ENCODE measurements at regions of chr1 and their contacts with region 1.

Region 1: GRCh38 chr1:235971571-235972310 is 93.1 kb downstream of the NID1 start:
- DNase-seq: peak; percentile 79 to 94
- H3K4me3 ChIP-seq: peak overlapping the region; percentile 32 to 60 (median 46); a peak in 6 of 8 replicates
- H3K27ac ChIP-seq: peak overlapping the region; percentile 73; the same call in 1 of the 2 replicates
- H3K4me1 ChIP-seq: 0 out of 7 replicates have a peak, but pooled peaks cover 0 to 3% (median 0%) of the 10 kb centered on the region in 4 experiments
- H3K27me3 ChIP-seq: no peaks in the 10 kb centered on the region
- CTCF ChIP-seq: peak; percentile 70 to 88 (median 82)
- EP300 ChIP-seq: 0 out of 3 replicates have a peak, but pooled peaks of 1 of the 2 experiments have one; percentile 8
- POLR2A ChIP-seq: peak; percentile 60 to 78
- RAD21 ChIP-seq: peak; percentile 90 to 93

Region 2: DNA sequence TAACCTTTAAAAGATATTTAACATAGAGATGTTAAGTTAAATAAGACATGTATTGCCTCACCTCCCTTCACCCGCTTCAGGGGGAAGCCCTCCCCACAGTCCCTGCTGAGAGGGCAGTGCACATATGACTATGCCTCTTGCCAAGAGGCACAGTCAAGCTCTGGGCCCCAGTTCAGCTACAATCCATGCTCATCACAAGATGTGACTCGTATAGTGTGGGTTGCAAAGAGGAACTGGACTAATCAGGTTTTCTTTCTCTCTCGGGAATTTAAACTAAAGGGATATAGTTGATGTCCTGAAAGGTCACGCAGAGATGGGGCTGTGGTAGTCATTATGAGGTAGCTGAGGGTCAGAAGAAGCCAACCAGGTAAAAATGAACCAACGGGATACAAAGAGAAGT is 140.6 kb before region 1 on chr1:
- CTCF ChIA-PET with region 1: interaction called, 12 read pairs
- POLR2A ChIA-PET with region 1: no interaction called
- DNase-seq: no peak
- H3K4me3 ChIP-seq: no peak overlapping the region
- H3K27ac ChIP-seq: no peak overlapping the region
- H3K4me1 ChIP-seq: no peaks in the 10 kb centered on the region
- H3K27me3 ChIP-seq: no peaks in the 10 kb centered on the region
- CTCF ChIP-seq: no peak
- EP300 ChIP-seq: no peak
- POLR2A ChIP-seq: no peak
- RAD21 ChIP-seq: no peak

Region 3: DNA sequence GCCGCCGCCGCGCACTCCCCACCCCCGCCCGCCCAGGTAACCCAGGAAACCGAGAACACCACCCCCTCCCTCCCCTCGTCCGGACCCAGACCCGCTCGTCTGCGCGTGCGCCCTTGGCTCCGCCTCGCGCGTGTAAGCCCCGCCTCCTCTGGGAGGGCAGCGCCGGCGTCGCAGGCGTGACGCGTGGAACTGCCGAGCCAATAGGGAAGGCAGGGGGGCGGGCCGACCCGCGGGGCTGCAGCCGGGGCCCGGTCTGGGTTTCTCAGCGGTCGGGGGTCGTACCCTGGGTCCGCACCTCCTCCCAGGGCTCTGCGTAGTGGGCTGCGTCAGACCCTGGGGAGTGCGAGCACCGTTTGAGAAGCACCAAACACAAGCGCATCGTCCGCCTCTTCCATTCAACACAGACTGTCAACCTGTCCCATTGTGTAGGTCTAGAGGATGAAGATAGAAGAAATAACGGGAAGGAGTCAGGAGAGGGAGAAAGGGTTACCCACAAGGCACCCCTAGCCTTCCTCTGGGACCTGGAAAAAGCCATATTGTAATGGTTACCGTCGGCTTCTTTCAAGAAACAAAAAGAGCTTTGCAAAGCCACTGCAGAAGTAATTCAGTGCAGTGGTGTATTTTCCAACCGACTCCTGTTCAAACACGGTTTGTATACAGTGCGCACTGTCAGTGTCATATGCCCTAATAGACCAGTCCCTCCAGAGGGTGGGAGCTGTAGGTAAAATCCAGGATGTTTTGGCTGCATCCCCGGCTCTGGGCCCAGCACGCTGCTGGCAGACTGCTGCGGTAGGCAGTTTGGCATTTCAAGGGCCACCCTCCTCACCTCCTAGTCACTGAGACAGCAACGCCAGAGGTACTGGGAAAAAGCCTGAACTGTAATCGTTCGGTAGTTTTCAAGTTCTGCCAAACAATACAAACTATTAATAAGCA is 104.6 kb before region 1 on chr1:
- CTCF ChIA-PET with region 1: interaction called, 53 read pairs
- POLR2A ChIA-PET with region 1: interaction called, 3 read pairs
- DNase-seq: peak; percentile 88 to 99
- H3K4me3 ChIP-seq: peak overlapping the region; percentile 72 to 96 (median 80)
- H3K27ac ChIP-seq: peak overlapping the region; percentile 11
- H3K4me1 ChIP-seq: no peaks in the 10 kb centered on the region; a peak in 1 of 7 replicates
- H3K27me3 ChIP-seq: peaks cover 2 to 17% (median 11%) of the 10 kb centered on the region in 4 experiments
- CTCF ChIP-seq: no peak
- EP300 ChIP-seq: no peak; a peak in 1 of 3 replicates
- POLR2A ChIP-seq: peak in 1 of 2 experiments; percentile 71; a peak in 2 of 3 replicates
- RAD21 ChIP-seq: no peak

Region 4: DNA sequence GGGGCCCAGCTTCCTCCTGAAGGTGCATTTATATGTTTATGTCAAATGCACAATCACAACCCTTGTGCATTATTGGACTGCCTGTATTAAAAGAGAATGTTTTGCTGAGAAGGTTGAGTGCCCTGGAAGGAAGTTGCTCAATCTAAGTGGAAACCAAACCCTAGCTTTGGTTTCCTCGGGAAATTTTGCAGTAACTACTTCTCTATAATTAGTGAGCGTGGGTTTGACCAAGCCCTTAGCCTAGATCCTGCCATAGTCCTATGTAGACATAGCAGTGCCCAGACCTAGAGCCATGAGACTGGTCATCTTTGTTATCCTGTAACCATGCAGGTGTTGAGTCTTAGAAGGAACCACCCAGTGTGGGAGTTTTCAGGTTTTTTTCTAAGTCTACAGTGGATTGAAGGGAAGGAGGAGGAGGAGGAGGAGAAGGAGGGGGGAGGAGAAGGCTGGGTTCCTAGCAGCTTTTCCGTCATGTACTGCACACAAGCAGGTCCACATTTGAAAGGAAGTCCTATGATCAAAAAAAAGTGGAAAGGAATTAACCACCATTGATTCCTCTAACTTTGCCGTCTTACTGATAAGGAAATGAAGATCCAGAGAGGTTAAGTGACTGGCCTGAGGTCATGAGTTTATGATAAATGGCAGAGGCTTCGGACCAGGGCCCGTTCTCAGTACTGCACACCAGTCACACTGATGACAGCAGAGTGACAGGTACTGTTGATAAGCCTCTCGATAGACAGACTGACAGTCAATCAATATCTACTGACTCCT is 32.8 kb before region 1 on chr1:
- CTCF ChIA-PET with region 1: interaction called, 35 read pairs
- POLR2A ChIA-PET with region 1: no interaction called
- DNase-seq: no peak
- H3K4me3 ChIP-seq: no peak overlapping the region
- H3K27ac ChIP-seq: no peak overlapping the region
- H3K4me1 ChIP-seq: no peaks in the 10 kb centered on the region
- H3K27me3 ChIP-seq: no peaks in the 10 kb centered on the region
- CTCF ChIP-seq: no peak
- EP300 ChIP-seq: no peak
- POLR2A ChIP-seq: no peak
- RAD21 ChIP-seq: no peak

Region 5: DNA sequence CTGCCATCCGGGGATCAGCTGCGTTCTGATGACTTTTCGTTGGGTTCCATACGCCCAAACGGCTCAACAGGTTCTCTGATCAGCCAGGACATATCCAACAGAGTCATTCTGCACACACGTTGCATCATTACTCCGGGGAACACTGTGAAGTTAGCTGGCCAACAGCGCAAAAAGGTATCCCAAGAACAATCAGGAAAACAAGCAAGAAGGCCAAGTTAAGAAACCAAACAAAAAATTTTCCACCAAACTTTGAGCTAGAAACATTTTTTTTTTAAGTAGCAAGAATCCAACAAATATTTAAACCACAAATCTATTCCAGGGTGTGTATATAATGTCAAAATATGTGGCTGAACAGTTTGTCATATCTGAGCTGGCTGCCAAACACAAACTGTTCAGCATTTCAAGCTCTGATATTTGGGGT is 64.0 kb after region 1 on chr1:
- CTCF ChIA-PET with region 1: no interaction called
- POLR2A ChIA-PET with region 1: no interaction called
- DNase-seq: no peak
- H3K4me3 ChIP-seq: no peak overlapping the region
- H3K27ac ChIP-seq: no peak overlapping the region
- H3K4me1 ChIP-seq: no peaks in the 10 kb centered on the region
- H3K27me3 ChIP-seq: no peaks in the 10 kb centered on the region
- CTCF ChIP-seq: no peak
- EP300 ChIP-seq: no peak
- POLR2A ChIP-seq: no peak
- RAD21 ChIP-seq: no peak

Measured in H1 (cell line).